Mammary epithelial cell (primary cell): ENCODE measurements at regions of chr1 and their contacts with region 1.

Region 1: DNA sequence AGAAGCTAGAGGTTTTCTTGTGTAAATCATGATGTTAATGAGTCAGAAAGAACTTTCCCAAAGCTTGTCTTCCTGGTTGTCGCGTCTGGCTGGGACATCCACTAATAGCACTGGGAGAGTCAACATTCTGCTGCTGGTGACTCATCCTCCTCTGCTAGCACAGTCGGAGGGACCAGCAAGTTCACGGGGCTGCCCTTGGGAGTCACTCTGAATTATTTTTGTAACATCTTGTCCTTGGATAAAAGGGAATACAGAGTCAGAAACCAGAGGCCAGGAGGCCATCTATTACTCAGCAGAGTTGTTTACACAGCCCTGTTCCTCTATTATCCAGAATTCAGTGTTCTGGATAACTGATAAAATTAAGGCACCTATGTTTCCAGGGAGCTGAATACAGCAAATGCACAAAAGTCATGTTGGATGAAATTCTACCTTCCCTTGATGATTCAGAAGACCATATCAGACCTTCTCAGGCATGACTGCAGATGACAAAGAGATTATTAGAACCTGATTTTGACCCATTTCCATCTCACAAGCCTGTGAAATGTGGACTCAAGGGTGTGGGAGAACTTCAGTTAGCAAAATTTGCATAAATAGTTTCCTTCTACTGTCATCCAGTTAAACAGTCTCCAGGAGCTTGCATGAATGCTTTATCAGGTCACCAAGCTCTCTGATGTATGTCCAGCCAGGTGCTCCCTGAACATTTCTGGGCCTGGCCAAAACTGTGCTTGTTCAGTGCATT is 68.1 kb downstream of the JAK1 start:
- DNase-seq: peak; percentile 91
- H3K4me3 ChIP-seq: no peak overlapping the region
- H3K27ac ChIP-seq: peak overlapping the region; percentile 78
- H3K4me1 ChIP-seq: peaks cover 38% of the 10 kb centered on the region
- H3K27me3 ChIP-seq: no peaks in the 10 kb centered on the region
- CTCF ChIP-seq: no peak

Region 2: GRCh38 chr1:64882574-64883255 is 15.6 kb before region 1 on chr1:
- CTCF ChIA-PET with region 1: no interaction called
- dilution Hi-C with region 1: no loop called
- in situ Hi-C with region 1: no loop called
- intact Hi-C with region 1: no loop called
- DNase-seq: no peak
- H3K4me3 ChIP-seq: no peak overlapping the region
- H3K27ac ChIP-seq: no peak overlapping the region
- H3K4me1 ChIP-seq: peaks cover 5% of the 10 kb centered on the region
- H3K27me3 ChIP-seq: no peaks in the 10 kb centered on the region
- CTCF ChIP-seq: no peak

Region 3: DNA sequence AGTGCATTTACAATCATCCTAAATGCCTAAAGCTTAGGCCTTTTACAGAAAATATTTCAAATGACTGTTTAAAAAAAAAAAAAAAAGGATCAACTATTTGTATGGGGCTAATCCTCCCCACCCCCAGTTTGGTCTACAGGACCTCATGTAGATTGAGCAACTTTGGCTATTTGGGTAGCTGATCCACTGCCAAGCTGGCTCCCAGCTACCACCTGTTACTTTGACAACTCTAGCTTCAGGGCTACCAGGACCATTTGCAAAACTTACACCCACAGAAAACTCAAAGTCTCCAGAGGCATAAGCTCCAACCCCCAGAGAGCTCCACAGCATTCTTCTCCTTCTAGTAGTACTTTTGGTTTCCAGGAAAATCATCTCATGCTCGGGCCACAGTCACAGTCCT is 38.7 kb after region 1 on chr1:
- CTCF ChIA-PET with region 1: no interaction called
- dilution Hi-C with region 1: loop called (anchors 5 kb)
- in situ Hi-C with region 1: no loop called
- intact Hi-C with region 1: no loop called
- DNase-seq: no peak
- H3K4me3 ChIP-seq: no peak overlapping the region
- H3K27ac ChIP-seq: no peak overlapping the region
- H3K4me1 ChIP-seq: peaks cover 24% of the 10 kb centered on the region
- H3K27me3 ChIP-seq: no peaks in the 10 kb centered on the region
- CTCF ChIP-seq: no peak

Region 4: GRCh38 chr1:65002508-65003315 is 104.4 kb after region 1 on chr1:
- CTCF ChIA-PET with region 1: no interaction called
- dilution Hi-C with region 1: no loop called
- in situ Hi-C with region 1: no loop called
- intact Hi-C with region 1: loop called (anchors 1 kb)
- DNase-seq: peak; percentile 89
- H3K4me3 ChIP-seq: peak overlapping the region; percentile 70 to 74 (median 70)
- H3K27ac ChIP-seq: peak overlapping the region; percentile 94
- H3K4me1 ChIP-seq: peaks cover 9% of the 10 kb centered on the region
- H3K27me3 ChIP-seq: no peaks in the 10 kb centered on the region
- CTCF ChIP-seq: no peak